Endothelial cell of umbilical vein (primary cell): ENCODE measurements at regions of chrX and their contacts with region 1.

Region 1: DNA sequence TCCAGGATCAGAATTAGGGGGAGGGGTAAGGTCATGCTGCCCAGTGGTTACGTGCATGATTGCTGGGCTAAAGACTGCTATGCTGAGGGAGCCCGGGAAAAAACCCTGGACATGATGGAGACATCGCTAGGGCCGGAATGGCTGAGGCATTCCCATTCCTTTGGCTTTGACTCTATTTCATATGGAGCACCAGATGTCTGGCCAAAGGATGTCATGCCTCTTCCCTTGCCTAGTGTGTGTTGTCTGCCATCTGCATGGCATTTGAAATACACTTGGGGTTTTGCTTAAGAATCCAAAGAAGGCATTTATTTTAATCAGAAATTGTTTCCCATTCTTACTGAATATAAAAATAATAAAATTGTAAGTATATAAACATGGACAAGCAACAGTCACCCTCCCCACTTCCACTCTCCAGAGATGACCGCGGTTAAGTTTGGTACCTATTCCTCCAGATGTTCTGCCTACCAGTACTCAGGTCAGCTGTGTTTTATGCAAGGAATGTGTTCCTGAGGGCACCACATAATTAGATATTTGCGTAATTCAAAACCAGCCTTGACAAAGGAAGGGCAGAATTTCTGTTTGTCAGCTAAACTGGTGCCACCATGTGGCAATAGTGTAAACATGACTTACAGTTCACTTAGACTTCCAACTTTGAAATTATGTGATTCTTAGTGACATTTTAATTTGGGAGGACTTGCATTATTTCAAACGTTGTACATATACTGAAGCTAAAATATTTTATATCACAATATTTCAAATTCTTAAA is 105.9 kb downstream of the CT47B1 start:
- DNase-seq: peak; percentile 68
- H3K4me3 ChIP-seq: no peak overlapping the region
- H3K27ac ChIP-seq: peak overlapping the region; percentile 96
- H3K4me1 ChIP-seq: peaks cover 24% of the 10 kb centered on the region
- H3K27me3 ChIP-seq: no peaks in the 10 kb centered on the region
- CTCF ChIP-seq: peak in 1 of 2 donors; percentile 23
- POLR2A ChIP-seq: no peak

Region 2: DNA sequence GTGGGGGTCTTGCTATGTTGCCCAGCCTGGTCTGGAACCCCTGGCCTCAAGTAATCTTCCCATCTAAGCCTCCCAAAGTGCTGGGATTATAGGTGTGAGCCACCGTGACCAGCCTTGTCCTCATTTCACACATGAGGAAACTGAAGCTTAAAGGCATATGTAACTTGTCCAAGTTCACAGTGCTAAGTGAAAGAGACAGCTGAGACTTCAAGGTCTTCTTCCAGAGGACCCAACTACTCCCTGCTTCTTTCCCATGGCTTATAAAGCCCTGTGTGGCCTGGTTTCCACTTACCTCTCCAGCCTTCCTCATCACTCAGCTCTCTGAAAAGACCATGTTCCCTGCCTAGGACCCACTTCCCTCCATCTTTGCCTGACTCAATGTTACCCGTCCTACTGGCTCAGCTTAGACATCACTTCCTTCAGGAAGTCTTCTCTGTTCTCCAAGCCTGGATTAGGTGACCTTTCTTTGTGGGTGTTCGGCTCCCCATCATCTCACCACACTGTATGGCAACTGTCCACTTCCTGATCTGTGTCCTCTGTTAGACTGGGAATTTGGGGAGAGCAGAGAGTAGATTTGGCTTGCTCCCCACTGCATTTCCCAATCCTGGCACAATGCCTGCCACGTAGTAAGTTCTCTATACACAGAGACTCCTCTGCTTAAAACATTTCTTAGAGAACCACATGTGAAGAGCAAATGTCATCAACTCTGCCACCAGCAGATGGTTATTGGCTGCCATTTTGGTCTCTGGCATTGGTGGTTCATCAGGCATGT is 270.3 kb before region 1 on chrX:
- CTCF ChIA-PET with region 1: interaction called, 3 read pairs
- POLR2A ChIA-PET with region 1: no interaction called
- dilution Hi-C with region 1: no loop called
- intact Hi-C with region 1: loop called (anchors 1 kb)
- DNase-seq: no peak
- H3K4me3 ChIP-seq: no peak overlapping the region
- H3K27ac ChIP-seq: no peak overlapping the region
- H3K4me1 ChIP-seq: peaks cover 3% of the 10 kb centered on the region
- H3K27me3 ChIP-seq: no peaks in the 10 kb centered on the region
- CTCF ChIP-seq: no peak
- POLR2A ChIP-seq: no peak

Region 3: GRCh38 chrX:120549483-120550452 is 220.0 kb before region 1 on chrX:
- CTCF ChIA-PET with region 1: interaction called, 3 read pairs
- POLR2A ChIA-PET with region 1: no interaction called
- dilution Hi-C with region 1: no loop called
- intact Hi-C with region 1: loop called (anchors 1 kb)
- DNase-seq: peak; percentile 82
- H3K4me3 ChIP-seq: peak overlapping the region in 1 of 3 experiments; percentile 17
- H3K27ac ChIP-seq: peak overlapping the region; percentile 81
- H3K4me1 ChIP-seq: peaks cover 41% of the 10 kb centered on the region
- H3K27me3 ChIP-seq: no peaks in the 10 kb centered on the region
- CTCF ChIP-seq: no peak
- POLR2A ChIP-seq: peak; percentile 55

Region 4: DNA sequence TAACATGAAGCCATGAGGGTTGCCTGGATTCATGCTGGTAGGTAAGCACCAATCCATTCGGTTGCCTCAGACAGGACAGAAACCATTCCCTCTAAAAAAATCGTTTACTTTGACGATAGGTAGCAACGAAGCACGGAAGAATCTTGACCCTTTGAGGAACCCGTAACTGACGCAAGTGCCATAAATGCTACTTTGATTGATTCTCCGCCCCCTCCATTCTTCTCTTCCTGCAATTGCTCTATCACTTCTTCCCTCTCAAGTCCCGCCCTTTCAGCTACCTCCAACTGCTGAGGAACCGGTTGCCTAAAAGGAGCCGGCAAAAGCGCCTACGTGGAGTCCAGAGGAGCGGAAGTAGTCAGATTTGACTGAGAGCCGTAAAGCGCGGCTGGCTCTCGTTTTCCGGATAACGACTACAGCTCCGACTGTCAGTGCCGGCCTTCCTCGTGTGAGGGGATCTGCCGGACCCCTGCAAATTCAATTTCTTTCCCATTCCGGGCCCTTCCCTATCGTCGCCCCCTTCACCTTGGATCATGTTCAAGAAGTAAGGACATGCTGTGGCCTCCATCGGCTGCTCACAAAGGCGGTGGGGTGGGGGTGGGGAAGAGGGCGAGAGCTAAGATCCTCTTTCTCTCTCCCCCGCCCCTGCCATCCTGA is 165.9 kb before region 1 on chrX and contains the start of gene MCTS1:
- CTCF ChIA-PET with region 1: no interaction called
- POLR2A ChIA-PET with region 1: no interaction called
- dilution Hi-C with region 1: no loop called
- intact Hi-C with region 1: loop called (anchors 2 kb)
- DNase-seq: peak; percentile 94
- H3K4me3 ChIP-seq: peak within 1 kb of the TSS; percentile 76 to 83 (median 79)
- H3K27ac ChIP-seq: peak within 1 kb of the TSS; percentile 72
- H3K4me1 ChIP-seq: peaks cover 10% of the 10 kb centered on the region
- H3K27me3 ChIP-seq: no peaks in the 10 kb centered on the region
- CTCF ChIP-seq: no peak
- POLR2A ChIP-seq: no peak
- total RNA-seq, gene MCTS1: 63.2 and 70.0 TPM in 2 replicates

Region 5: GRCh38 chrX:120672390-120672789 is 97.4 kb before region 1 on chrX:
- CTCF ChIA-PET with region 1: no interaction called
- POLR2A ChIA-PET with region 1: interaction called, 4 read pairs
- dilution Hi-C with region 1: no loop called
- intact Hi-C with region 1: loop called (anchors 1 kb)
- DNase-seq: peak; percentile 85
- H3K4me3 ChIP-seq: no peak overlapping the region
- H3K27ac ChIP-seq: peak overlapping the region; percentile 94
- H3K4me1 ChIP-seq: peaks cover 31% of the 10 kb centered on the region
- H3K27me3 ChIP-seq: no peaks in the 10 kb centered on the region
- CTCF ChIP-seq: no peak
- POLR2A ChIP-seq: peak; percentile 21

Region 6: GRCh38 chrX:120749141-120749846 is 20.5 kb before region 1 on chrX:
- CTCF ChIA-PET with region 1: interaction called, 9 read pairs
- POLR2A ChIA-PET with region 1: no interaction called
- dilution Hi-C with region 1: no loop called
- intact Hi-C with region 1: loop called (anchors 1 kb)
- DNase-seq: peak; percentile 69
- H3K4me3 ChIP-seq: no peak overlapping the region
- H3K27ac ChIP-seq: peak overlapping the region; percentile 51
- H3K4me1 ChIP-seq: peaks cover 16% of the 10 kb centered on the region
- H3K27me3 ChIP-seq: no peaks in the 10 kb centered on the region
- CTCF ChIP-seq: no peak
- POLR2A ChIP-seq: no peak

Region 7: GRCh38 chrX:120813982-120814381 is 44.2 kb after region 1 on chrX:
- CTCF ChIA-PET with region 1: no interaction called
- POLR2A ChIA-PET with region 1: no interaction called
- dilution Hi-C with region 1: no loop called
- intact Hi-C with region 1: no loop called
- DNase-seq: no peak
- H3K4me3 ChIP-seq: no peak overlapping the region
- H3K27ac ChIP-seq: no peak overlapping the region
- H3K4me1 ChIP-seq: no peaks in the 10 kb centered on the region
- H3K27me3 ChIP-seq: no peaks in the 10 kb centered on the region
- CTCF ChIP-seq: no peak
- POLR2A ChIP-seq: no peak